Activated naive CD4-positive, alpha-beta T cell treated with anti-CD3 and anti-CD28 coated beads for 36 hours (primary cell): ENCODE measurements at regions of chr12 and their contacts with region 1.

Region 1: GRCh38 chr12:4604684-4605193 is 42.7 kb downstream of the DYRK4 start:
- DNase-seq: peak; percentile 92
- H3K4me3 Mint-ChIP-seq: peak overlapping the region; percentile 91
- H3K27ac Mint-ChIP-seq: peak overlapping the region; percentile 81
- H3K4me1 Mint-ChIP-seq: peaks cover 18% of the 10 kb centered on the region
- H3K27me3 Mint-ChIP-seq: peaks cover 8% of the 10 kb centered on the region

Region 2: DNA sequence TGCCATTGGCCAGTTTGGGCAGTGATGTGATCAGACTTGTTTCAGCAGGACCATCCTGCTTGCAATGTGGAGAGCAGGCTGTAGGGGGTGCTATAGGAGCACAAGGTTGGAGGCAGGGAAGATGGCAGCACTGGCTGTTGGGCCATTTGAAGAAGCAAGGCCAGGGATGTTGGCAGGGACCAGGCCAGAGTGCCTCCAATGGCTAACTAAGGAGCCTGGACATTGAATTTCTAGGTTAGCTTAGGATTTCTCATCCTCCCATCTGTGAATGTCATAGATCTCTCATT is 248.8 kb before region 1 on chr12:
- CTCF ChIA-PET with region 1: no interaction called
- intact Hi-C with region 1: loop called (anchors 1 kb)
- DNase-seq: peak; percentile 85
- H3K4me3 Mint-ChIP-seq: no peak overlapping the region
- H3K27ac Mint-ChIP-seq: peak overlapping the region; percentile 46
- H3K4me1 Mint-ChIP-seq: no peaks in the 10 kb centered on the region
- H3K27me3 Mint-ChIP-seq: no peaks in the 10 kb centered on the region

Region 3: GRCh38 chr12:4526923-4527546 is 77.7 kb before region 1 on chr12:
- CTCF ChIA-PET with region 1: no interaction called
- intact Hi-C with region 1: no loop called
- DNase-seq: no peak
- H3K4me3 Mint-ChIP-seq: no peak overlapping the region
- H3K27ac Mint-ChIP-seq: no peak overlapping the region
- H3K4me1 Mint-ChIP-seq: peaks cover 2% of the 10 kb centered on the region
- H3K27me3 Mint-ChIP-seq: no peaks in the 10 kb centered on the region

Region 4: DNA sequence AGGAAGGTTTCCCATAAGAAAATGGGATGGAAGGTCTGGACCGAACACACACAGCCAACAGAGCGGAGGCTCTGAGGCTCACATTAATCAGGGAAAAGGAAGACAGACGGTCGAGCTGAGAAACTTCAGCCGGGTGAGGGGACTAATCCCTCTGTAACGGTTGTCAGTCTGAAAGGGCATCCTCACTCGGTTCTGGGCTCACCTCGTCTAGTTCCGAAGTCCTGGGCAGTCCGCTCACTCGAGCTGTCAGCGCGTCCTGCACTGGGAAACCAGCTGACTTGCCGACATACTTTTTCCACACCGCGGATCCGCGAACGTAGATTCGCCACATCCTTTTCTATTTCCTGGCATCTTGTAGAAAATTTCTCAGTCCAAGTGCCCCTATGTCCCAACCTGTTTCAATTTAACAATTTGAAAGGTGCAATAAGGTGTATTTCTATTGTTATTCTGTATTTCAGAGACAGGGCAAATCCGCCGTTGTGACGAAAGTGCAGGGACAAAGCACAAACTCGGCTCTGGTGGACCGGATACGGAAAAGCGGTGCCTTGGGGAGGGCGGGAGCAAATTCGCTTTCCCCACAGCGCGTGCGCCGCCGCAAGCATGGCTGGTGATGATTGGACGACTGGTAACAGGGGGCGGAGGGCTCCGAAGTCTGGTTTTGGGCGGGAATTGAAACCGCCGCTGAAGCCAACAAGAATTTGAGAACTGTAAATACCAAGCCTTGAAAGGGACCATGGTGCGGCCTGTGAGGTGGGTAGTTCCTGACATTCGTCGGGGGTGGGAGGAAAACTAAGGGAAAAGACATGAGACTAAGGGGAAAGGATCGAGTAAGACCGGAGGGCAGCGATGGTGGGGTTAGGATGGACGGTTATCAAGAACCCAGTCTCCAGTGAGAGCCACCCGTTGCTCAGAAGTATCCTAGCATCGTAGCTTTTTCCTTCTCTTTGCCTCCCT is 66.3 kb before region 1 on chr12 and contains the start of gene RAD51AP1:
- CTCF ChIA-PET with region 1: no interaction called
- intact Hi-C with region 1: loop called (anchors 1 kb)
- DNase-seq: peak; percentile 97
- H3K4me3 Mint-ChIP-seq: peak within 1 kb of the TSS; percentile 97
- H3K27ac Mint-ChIP-seq: peak within 1 kb of the TSS; percentile 98
- H3K4me1 Mint-ChIP-seq: peaks cover 25% of the 10 kb centered on the region
- H3K27me3 Mint-ChIP-seq: no peaks in the 10 kb centered on the region
- total RNA-seq, gene RAD51AP1: 69.5 to 76.5 TPM

Region 5: DNA sequence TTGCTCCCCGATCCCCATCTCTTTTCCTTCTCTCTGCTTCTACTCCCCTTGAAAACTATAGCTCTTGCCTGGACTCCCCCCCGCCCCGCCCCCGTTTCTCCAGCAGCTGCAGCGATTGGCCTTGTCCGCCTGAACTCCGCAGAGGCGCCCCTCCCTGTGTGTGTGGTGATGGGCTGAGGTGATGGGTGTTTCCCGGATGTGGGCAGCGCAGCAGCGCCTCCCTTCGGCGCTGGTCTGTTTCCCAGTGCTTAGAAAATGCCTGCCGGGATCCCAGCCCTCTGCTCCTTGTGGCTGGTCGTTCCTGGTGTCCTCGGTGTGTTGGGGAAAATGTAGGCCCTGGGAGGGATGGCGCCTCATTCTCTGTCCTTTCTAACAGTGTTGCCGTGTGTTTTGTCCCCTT is 158.8 kb after region 1 on chr12:
- CTCF ChIA-PET with region 1: interaction called, 4 read pairs
- intact Hi-C with region 1: loop called (anchors 1 kb)
- DNase-seq: peak; percentile 7
- H3K4me3 Mint-ChIP-seq: no peak overlapping the region
- H3K27ac Mint-ChIP-seq: no peak overlapping the region
- H3K4me1 Mint-ChIP-seq: no peaks in the 10 kb centered on the region
- H3K27me3 Mint-ChIP-seq: no peaks in the 10 kb centered on the region

Region 6: GRCh38 chr12:4829161-4829792 is 224.5 kb after region 1 on chr12:
- CTCF ChIA-PET with region 1: no interaction called
- intact Hi-C with region 1: loop called (anchors 5 kb)
- DNase-seq: peak; percentile 44
- H3K4me3 Mint-ChIP-seq: peak overlapping the region; percentile 64
- H3K27ac Mint-ChIP-seq: peak overlapping the region; percentile 87
- H3K4me1 Mint-ChIP-seq: peaks cover 59% of the 10 kb centered on the region
- H3K27me3 Mint-ChIP-seq: no peaks in the 10 kb centered on the region